SK-N-SH (cell line): ENCODE measurements at regions of chr12 and their contacts with region 1.

Region 1: DNA sequence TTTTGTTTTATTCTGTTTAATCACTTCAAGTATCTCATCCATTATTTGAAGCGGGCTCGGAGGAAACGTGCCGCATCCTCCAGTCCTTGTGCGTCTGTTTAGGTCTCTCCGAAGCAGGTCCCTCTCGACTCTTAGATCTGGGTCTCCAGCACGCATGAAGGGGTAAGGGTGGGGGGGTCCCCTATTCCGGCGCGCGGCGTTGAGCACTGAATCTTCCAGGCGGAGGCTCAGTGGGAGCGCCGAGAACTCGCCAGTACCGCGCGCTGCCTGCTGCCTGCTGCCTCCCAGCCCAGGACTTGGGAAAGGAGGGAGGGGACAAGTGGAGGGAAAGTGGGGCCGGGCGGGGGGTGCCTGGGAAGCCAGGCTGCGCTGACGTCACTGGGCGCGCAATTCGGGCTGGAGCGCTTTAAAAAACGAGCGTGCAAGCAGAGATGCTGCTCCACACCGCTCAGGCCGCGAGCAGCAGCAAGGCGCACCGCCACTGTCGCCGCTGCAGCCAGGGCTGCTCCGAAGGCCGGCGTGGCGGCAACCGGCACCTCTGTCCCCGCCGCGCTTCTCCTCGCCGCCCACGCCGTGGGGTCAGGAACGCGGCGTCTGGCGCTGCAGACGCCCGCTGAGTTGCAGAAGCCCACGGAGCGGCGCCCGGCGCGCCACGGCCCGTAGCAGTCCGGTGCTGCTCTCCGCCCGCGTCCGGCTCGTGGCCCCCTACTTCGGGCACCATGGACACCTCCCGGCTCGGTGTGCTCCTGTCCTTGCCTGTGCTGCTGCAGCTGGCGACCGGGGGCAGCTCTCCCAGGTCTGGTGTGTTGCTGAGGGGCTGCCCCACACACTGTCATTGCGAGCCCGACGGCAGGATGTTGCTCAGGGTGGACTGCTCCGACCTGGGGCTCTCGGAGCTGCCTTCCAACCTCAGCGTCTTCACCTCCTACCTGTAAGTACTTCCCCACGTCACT is at the start of gene LGR5:
- DNase-seq: peak; percentile 91
- H3K4me3 ChIP-seq: peak within 1 kb of the TSS; percentile 57
- H3K27ac ChIP-seq: peak within 1 kb of the TSS in 1 of 2 experiments; percentile 50; a peak in 1 of 4 replicates
- H3K4me1 ChIP-seq: peaks cover 8 to 21% of the 10 kb centered on the region in 2 experiments; a peak in 3 of 4 replicates
- H3K27me3 ChIP-seq: peaks cover 30% of the 10 kb centered on the region
- CTCF ChIP-seq: no peak
- EP300 ChIP-seq: no peak
- RAD21 ChIP-seq: no peak; the same call in 1 of the 2 replicates
- polyA plus RNA-seq, gene LGR5: 1.4 and 5.6 TPM in 2 replicates

Region 2: GRCh38 chr12:71551529-71551928 is 111.9 kb after region 1 on chr12:
- CTCF ChIA-PET with region 1: interaction called, 10 read pairs
- POLR2A ChIA-PET with region 1: no interaction called
- DNase-seq: peak; percentile 22
- H3K4me3 ChIP-seq: no peak overlapping the region
- H3K27ac ChIP-seq: no peak overlapping the region
- H3K4me1 ChIP-seq: no peaks in the 10 kb centered on the region; a peak in 1 of 4 replicates
- H3K27me3 ChIP-seq: no peaks in the 10 kb centered on the region
- CTCF ChIP-seq: peak; percentile 58
- EP300 ChIP-seq: no peak
- RAD21 ChIP-seq: peak; percentile 81